Posterior cingulate gyrus (tissue), 11 donors: ENCODE measurements at regions of chr9 and their contacts with region 1.

Region 1: DNA sequence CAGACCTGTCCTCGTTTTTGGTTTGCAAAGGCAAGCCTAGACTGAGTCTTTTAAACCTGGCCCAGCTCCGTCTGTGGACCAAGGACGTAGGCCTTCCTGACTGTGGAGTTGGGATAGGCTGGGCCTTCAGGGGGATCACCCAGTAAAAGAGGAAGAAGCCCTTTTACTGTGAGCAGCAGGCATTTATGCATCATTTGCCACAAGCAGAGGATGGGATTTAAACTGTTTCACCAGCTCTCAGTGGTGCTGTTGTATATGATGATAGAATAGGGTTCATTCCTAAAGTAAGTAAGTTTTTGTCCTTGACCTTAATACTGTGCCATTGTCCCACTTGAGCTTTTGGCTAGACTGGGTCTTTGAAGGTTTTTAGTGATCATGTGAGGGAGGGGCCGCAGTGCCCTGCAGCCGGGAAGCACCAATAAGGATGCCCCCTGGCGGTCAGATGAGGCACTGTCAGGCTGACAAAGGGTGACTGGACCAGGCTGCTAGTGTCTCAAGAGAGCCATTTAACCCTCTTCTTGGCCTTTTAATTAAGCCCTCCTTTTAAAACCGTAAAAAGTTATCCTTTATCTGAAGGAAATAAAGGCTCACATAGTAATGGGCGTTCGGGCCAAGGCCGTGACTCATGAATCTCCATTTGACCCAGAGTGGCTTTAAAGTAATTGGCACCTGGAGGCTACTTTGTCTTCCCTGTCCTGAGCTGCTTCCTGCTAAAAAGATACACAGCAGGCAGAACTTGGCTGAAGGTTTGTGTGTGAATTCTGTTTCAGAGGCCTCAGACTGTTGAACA is 74.0 kb downstream of the UBAP1 start:
- DNase-seq: peak in 9 of 10 donors; percentile 61 to 94 (median 71)

Region 2: DNA sequence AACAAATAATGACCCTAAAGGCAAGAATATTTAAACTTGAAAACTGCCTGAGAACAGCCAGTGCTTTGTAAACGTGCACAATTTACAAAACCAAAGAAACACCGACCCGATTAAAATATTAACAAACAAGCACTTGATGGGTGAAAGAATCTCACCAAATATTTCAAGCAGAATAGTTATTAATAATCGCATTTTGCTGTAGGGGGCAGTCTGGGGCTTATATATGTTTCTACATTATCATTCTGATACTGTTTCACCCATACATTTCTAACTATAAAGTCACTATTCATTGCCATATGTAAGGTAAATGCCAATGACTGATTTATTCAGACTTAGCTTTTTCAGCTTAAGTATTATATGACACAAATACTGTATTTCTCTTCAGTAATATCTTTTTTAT is 241.9 kb before region 1 on chr9:
- intact Hi-C with region 1: loop called (anchors 1 kb)
- DNase-seq: no peak

Region 3: GRCh38 chr9:34126207-34127034 is 126.4 kb before region 1 on chr9 and contains the start of gene DCAF12:
- intact Hi-C with region 1: loop called (anchors 5 kb)
- DNase-seq: peak; percentile 83 to 98 (median 86)